A549 (cell line): ENCODE measurements at regions of chr1 and their contacts with region 1.

Region 1: DNA sequence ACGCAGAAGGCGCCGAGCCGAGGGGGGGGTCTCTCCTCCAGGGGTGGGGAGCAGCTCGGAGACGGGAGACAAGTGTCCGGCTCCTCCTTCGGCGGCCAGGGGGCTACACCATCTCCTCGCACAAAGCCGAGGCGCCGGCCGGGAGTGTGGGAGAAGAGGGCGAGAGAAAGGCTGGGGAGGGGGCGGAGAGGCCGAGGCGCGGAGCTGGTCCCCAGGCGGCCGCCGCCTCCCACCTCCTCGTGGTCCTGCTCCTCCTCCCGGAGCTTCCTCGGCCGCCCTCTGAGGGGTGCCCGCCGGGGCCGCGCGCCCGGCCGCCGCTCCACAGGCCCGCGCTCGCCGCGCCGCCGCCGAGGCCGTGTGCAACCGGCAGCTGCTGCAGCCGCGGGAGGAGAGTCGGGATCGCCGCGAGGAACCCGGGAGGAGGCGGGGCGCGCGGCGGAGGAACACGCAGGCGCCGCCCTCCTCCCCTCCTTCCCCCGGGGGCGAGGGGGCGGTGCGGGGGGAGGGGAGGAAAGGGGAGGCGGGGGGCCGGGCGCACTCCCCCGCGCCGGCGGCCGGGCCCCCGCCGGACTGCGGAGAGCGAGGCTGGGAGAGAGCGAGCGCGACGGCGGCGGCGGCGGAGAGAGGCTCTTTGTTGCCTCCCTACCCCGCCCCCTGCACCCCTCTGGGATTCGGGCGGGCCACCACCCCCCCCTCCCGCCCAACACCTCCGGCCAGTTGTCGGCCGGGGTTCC is at the start of gene ENAH:
- DNase-seq: peak; percentile 65 to 88
- ATAC-seq: peak; percentile 72 to 76
- H3K4me3 ChIP-seq: peak within 1 kb of the TSS; percentile 93
- H3K27ac ChIP-seq: peak within 1 kb of the TSS; percentile 95 to 100
- H3K4me1 ChIP-seq: peaks cover 56% of the 10 kb centered on the region
- CTCF ChIP-seq: no peak
- EP300 ChIP-seq: peak in 1 of 2 experiments; percentile 50; a peak in 1 of 5 replicates
- POLR2A ChIP-seq: peak; percentile 80
- RAD21 ChIP-seq: no peak; a peak in 2 of 5 replicates
- polyA plus RNA-seq, gene ENAH: 124 and 142 TPM in 2 replicates

Region 2: GRCh38 chr1:225253784-225254183 is 399.1 kb before region 1 on chr1:
- CTCF ChIA-PET with region 1: no interaction called
- POLR2A ChIA-PET with region 1: no interaction called
- DNase-seq: no peak
- ATAC-seq: no peak
- H3K4me3 ChIP-seq: no peak overlapping the region
- H3K27ac ChIP-seq: no peak overlapping the region
- H3K4me1 ChIP-seq: no peaks in the 10 kb centered on the region
- CTCF ChIP-seq: no peak
- EP300 ChIP-seq: no peak
- POLR2A ChIP-seq: no peak
- RAD21 ChIP-seq: no peak

Region 3: GRCh38 chr1:225700164-225700740 is 47.4 kb after region 1 on chr1:
- CTCF ChIA-PET with region 1: interaction called, 12 read pairs
- POLR2A ChIA-PET with region 1: interaction called, 26 read pairs
- DNase-seq: peak; percentile 89 to 97
- ATAC-seq: peak; percentile 96 to 98
- H3K4me3 ChIP-seq: no peak overlapping the region
- H3K27ac ChIP-seq: peak overlapping the region; percentile 84 to 93
- H3K4me1 ChIP-seq: peaks cover 35% of the 10 kb centered on the region
- CTCF ChIP-seq: no peak
- EP300 ChIP-seq: peak; percentile 86 to 89; a peak in 2 of 5 replicates
- POLR2A ChIP-seq: no peak
- RAD21 ChIP-seq: peak; percentile 19 to 58; a peak in 3 of 5 replicates

Region 4: DNA sequence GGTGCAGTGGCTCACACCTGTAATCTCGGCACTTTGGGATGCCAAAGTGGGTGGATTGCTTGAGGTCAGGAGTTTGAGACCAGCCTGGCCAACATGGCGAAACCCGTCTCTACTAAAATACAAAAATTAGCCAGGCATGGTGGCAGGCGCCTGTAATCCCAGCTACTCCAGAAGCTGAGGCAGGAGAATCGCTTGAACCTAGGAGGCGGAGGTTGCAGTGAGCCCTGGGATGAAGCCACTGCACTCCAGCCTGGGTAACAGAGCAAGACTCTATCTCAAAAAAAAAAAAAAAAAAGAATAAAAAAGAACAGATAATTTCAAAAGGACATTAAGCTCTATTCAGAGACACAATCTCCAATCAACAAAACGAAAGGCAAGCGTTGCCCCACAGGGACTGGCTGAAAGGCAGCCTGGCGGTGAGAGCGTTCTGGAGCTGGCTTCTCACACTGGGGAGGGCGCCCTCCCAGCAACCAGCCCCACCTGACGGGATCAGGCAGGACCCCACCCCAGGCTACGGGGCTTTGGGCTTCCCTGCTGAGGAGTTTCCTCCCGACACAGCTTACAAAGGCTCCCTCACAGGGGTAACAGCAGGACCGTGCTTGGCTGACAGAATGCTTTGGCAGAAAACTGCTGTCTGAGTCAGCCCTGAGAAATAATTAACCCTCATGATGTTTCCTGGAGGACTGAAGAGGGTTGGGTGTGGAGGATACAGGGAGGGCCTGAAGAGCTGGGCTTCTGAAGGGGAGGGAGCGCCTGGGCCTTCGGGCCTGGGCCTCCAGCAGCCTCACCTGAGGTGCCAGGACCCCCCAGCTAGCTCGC is 93.7 kb after region 1 on chr1:
- CTCF ChIA-PET with region 1: interaction called, 4 read pairs
- POLR2A ChIA-PET with region 1: interaction called, 13 read pairs
- DNase-seq: peak; percentile 88 to 89
- ATAC-seq: peak; percentile 98 to 99
- H3K4me3 ChIP-seq: peak overlapping the region; percentile 35
- H3K27ac ChIP-seq: peak overlapping the region; percentile 90 to 92
- H3K4me1 ChIP-seq: peaks cover 28% of the 10 kb centered on the region
- CTCF ChIP-seq: no peak
- EP300 ChIP-seq: no peak
- POLR2A ChIP-seq: 0 out of 2 replicates have a peak, but pooled peaks have one; percentile 5
- RAD21 ChIP-seq: peak; percentile 23 to 31; a peak in 2 of 5 replicates